ENCODE measurements at regions of chr11 and their contacts with region 1.

Region 1: GRCh38 chr11:94897330-94897768 is 76.0 kb downstream of the CWC15 start:
- DNase-seq: peak in 4 of 9 experiments; percentile 27 to 45 (median 35)
- ATAC-seq: no peak
- H3K4me3 ChIP-seq: no peak overlapping the region
- H3K4me3 Mint-ChIP-seq: no peak overlapping the region
- H3K27ac ChIP-seq: no peak overlapping the region
- H3K27ac Mint-ChIP-seq: no peak overlapping the region
- H3K4me1 ChIP-seq: no peaks in the 10 kb centered on the region
- H3K4me1 Mint-ChIP-seq: no peaks in the 10 kb centered on the region
- H3K27me3 ChIP-seq: no peaks in the 10 kb centered on the region
- H3K27me3 Mint-ChIP-seq: peaks cover 2% of the 10 kb centered on the region
- CTCF ChIP-seq: peak; percentile 86

Region 2: DNA sequence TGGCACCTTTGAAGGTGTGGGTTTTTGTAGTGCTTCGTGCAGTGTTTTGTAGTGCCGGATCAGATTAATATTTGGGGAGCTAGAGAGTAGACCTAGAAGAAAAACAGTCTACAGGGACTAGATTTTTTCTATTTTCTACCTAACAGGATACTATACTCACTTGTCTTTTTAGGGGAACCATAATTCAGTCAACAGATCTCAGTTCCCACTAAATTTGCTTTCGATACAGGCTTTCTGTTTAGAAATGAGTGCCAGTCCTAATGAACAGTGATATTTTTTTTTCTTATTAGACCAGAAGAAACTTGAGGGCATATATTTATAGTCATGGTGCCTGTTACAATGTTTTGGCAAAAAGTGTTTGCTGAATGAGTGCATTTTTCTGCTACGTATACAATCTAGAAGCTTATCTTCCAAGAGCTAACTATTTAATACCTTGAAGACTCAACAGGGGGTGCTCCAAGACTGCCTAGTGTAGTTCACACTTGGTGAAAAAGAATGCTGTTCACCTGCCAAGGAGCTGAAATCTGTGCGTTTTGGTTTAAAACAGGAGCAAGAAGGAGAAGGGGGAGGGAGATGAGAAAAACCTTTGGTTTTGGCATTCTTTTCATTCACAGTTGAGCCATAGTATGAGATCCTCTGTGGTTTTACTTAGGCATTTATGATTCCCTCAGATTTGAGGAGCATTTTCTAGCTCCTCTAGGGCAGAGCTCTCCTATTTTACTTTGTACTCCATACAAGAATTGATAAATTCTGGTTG is 1002.1 kb before region 1 on chr11:
- CTCF ChIA-PET with region 1: no interaction called
- POLR2A ChIA-PET with region 1: no interaction called
- intact Hi-C with region 1: loop called in 1 of 2 experiments (anchors 5 kb)
- DNase-seq: peak in 3 of 9 experiments; percentile 10 to 52 (median 44)
- ATAC-seq: no peak
- H3K4me3 ChIP-seq: no peak overlapping the region
- H3K4me3 Mint-ChIP-seq: no peak overlapping the region
- H3K27ac ChIP-seq: no peak overlapping the region
- H3K27ac Mint-ChIP-seq: no peak overlapping the region
- H3K4me1 ChIP-seq: no peaks in the 10 kb centered on the region
- H3K4me1 Mint-ChIP-seq: no peaks in the 10 kb centered on the region
- H3K27me3 ChIP-seq: peaks cover 0 to 2% of the 10 kb centered on the region in 2 experiments
- H3K27me3 Mint-ChIP-seq: peaks cover 41% of the 10 kb centered on the region
- CTCF ChIP-seq: peak; percentile 30

Region 3: DNA sequence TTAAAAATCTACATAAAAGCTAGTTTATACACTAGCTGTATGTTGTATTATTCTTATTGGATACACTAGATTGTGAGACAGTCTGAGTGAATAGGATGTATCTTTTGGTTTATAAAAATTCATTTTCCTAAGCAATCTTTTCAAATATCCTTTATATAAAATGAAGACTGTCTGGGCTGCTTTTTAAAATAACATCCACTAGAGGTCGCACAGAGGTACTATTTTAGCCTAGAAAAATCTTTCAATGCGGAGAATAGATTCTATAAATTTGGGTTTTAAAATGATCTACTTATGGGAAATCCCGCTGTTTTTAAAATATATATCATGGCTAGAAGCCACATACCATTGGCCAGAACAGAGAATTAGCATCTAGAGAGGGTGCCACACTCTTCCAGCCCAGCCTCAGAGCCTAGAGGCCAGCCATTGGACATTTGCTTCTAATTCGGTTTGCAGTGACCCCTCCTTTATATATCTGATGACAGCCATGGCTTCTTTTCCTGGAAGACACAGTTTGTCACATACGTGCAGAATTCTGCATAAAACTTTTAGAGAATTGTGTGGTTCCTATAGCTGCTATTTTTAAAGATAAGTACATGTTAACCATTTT is 377.8 kb before region 1 on chr11:
- CTCF ChIA-PET with region 1: interaction called, 10 read pairs
- POLR2A ChIA-PET with region 1: no interaction called
- intact Hi-C with region 1: loop called in 1 of 2 experiments (anchors 2 kb)
- DNase-seq: peak in 3 of 9 experiments; percentile 12 to 56 (median 45)
- ATAC-seq: peak; percentile 49
- H3K4me3 ChIP-seq: no peak overlapping the region
- H3K4me3 Mint-ChIP-seq: no peak overlapping the region
- H3K27ac ChIP-seq: no peak overlapping the region
- H3K27ac Mint-ChIP-seq: no peak overlapping the region
- H3K4me1 ChIP-seq: no peaks in the 10 kb centered on the region
- H3K4me1 Mint-ChIP-seq: no peaks in the 10 kb centered on the region
- H3K27me3 ChIP-seq: no peaks in the 10 kb centered on the region
- H3K27me3 Mint-ChIP-seq: peaks cover 9% of the 10 kb centered on the region
- CTCF ChIP-seq: peak; percentile 72

Region 4: DNA sequence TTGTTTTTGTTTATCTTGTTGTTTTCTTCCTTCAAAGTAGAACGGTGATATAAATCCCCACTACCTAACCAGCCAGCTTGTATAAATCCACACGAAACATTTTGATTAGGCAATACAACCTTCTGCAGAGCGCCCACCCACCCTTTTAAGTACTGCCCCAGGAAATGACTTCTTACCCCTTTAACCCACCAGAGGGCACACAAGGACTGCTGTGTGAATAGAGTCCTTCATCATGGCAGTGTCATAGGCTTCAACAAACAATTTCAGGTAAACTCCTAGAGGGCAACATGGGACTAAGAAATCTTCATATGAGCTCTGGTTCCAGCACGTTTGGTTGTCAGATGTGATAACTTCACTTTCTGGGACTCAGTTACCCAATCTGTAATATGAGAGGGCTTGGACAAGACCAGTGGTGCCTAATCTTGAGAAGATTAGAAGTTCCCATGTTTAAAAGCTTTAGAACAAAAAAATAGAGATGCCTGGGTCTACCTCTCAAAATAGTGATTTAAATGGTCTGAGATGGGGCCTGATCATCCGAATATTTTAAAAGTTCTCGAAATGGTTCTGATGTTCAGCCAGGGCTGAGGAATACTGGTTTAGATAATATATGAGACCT is 274.1 kb before region 1 on chr11:
- CTCF ChIA-PET with region 1: interaction called, 4 read pairs
- POLR2A ChIA-PET with region 1: no interaction called
- intact Hi-C with region 1: loop called (anchors 1 to 5 kb)
- DNase-seq: peak in 6 of 9 experiments; percentile 19 to 67 (median 30)
- ATAC-seq: peak; percentile 68
- H3K4me3 ChIP-seq: no peak overlapping the region
- H3K4me3 Mint-ChIP-seq: no peak overlapping the region
- H3K27ac ChIP-seq: no peak overlapping the region
- H3K27ac Mint-ChIP-seq: no peak overlapping the region
- H3K4me1 ChIP-seq: no peaks in the 10 kb centered on the region
- H3K4me1 Mint-ChIP-seq: peaks cover 3% of the 10 kb centered on the region
- H3K27me3 ChIP-seq: no peaks in the 10 kb centered on the region
- H3K27me3 Mint-ChIP-seq: peaks cover 11% of the 10 kb centered on the region
- CTCF ChIP-seq: peak; percentile 41

Region 5: GRCh38 chr11:94786264-94787126 is 110.9 kb before region 1 on chr11:
- CTCF ChIA-PET with region 1: no interaction called
- POLR2A ChIA-PET with region 1: no interaction called
- intact Hi-C with region 1: loop called in 1 of 2 experiments (anchors 2 kb)
- DNase-seq: peak in 2 of 9 experiments; percentile 28 to 53
- ATAC-seq: peak; percentile 38
- H3K4me3 ChIP-seq: no peak overlapping the region
- H3K4me3 Mint-ChIP-seq: no peak overlapping the region
- H3K27ac ChIP-seq: no peak overlapping the region
- H3K27ac Mint-ChIP-seq: no peak overlapping the region
- H3K4me1 ChIP-seq: no peaks in the 10 kb centered on the region
- H3K4me1 Mint-ChIP-seq: no peaks in the 10 kb centered on the region
- H3K27me3 ChIP-seq: no peaks in the 10 kb centered on the region
- H3K27me3 Mint-ChIP-seq: peaks cover 6% of the 10 kb centered on the region
- CTCF ChIP-seq: peak; percentile 60

Region 6: DNA sequence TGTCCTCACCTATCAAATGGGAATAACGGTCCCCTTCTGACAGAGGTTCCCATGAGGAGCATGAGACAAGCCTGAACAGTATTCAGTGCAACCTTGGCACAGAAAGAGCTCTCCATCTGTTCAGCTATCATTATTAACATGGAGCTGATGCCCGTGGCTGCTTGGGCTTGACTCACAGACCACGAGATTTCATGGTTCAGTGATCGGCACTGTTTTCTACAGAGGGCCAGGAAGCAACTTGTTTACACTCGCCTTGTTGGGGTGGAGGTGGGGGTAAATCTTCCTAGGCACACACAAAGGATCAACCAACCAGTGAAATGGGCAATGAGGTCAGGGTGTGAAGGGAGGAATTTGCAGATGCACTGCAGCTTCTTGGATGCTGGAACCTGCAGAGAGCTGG is 12.2 kb before region 1 on chr11:
- CTCF ChIA-PET with region 1: interaction called, 17 read pairs
- POLR2A ChIA-PET with region 1: no interaction called
- intact Hi-C with region 1: no loop called
- DNase-seq: no peak
- ATAC-seq: no peak
- H3K4me3 ChIP-seq: no peak overlapping the region
- H3K4me3 Mint-ChIP-seq: no peak overlapping the region
- H3K27ac ChIP-seq: no peak overlapping the region
- H3K27ac Mint-ChIP-seq: no peak overlapping the region
- H3K4me1 ChIP-seq: no peaks in the 10 kb centered on the region
- H3K4me1 Mint-ChIP-seq: no peaks in the 10 kb centered on the region
- H3K27me3 ChIP-seq: no peaks in the 10 kb centered on the region
- H3K27me3 Mint-ChIP-seq: peaks cover 2% of the 10 kb centered on the region
- CTCF ChIP-seq: no peak

Region 7: DNA sequence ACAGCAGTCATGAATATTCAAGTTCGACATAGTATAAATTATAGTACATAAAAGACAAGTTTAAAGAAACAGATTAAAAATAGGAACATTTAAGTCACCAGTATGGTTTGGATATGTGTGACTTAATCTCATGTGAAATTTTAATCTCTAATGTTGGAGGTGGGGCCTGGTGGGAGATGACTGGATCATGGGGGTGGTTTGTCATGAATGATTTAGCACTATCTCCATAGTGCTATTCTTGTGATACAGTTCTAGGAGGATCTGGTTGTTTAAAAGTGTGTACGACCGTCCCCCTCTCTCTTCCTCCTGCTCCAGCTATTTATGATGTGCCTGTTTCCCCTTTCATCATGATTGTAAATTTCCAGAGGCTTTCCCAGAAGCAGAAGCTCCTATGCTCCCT is 131.0 kb after region 1 on chr11:
- CTCF ChIA-PET with region 1: no interaction called
- POLR2A ChIA-PET with region 1: no interaction called
- intact Hi-C with region 1: no loop called
- DNase-seq: no peak
- ATAC-seq: no peak
- H3K4me3 ChIP-seq: no peak overlapping the region
- H3K4me3 Mint-ChIP-seq: no peak overlapping the region
- H3K27ac ChIP-seq: no peak overlapping the region
- H3K27ac Mint-ChIP-seq: no peak overlapping the region
- H3K4me1 ChIP-seq: no peaks in the 10 kb centered on the region
- H3K4me1 Mint-ChIP-seq: no peaks in the 10 kb centered on the region
- H3K27me3 ChIP-seq: no peaks in the 10 kb centered on the region
- H3K27me3 Mint-ChIP-seq: peaks cover 4% of the 10 kb centered on the region
- CTCF ChIP-seq: no peak

Measured in CD8-positive, alpha-beta T cell (primary cell).